ENCODE measurements at regions of chr4 and their contacts with region 1.

Region 1: GRCh38 chr4:89486042-89486441 is 178.4 kb upstream of the GPRIN3 start:
- DNase-seq: peak; percentile 49 to 71 (median 67)
- H3K4me3 ChIP-seq: no peak overlapping the region
- H3K27ac ChIP-seq: no peak overlapping the region
- H3K4me1 ChIP-seq: peaks cover 4 to 37% (median 12%) of the 10 kb centered on the region in 4 experiments
- H3K27me3 ChIP-seq: no peaks in the 10 kb centered on the region

Region 2: DNA sequence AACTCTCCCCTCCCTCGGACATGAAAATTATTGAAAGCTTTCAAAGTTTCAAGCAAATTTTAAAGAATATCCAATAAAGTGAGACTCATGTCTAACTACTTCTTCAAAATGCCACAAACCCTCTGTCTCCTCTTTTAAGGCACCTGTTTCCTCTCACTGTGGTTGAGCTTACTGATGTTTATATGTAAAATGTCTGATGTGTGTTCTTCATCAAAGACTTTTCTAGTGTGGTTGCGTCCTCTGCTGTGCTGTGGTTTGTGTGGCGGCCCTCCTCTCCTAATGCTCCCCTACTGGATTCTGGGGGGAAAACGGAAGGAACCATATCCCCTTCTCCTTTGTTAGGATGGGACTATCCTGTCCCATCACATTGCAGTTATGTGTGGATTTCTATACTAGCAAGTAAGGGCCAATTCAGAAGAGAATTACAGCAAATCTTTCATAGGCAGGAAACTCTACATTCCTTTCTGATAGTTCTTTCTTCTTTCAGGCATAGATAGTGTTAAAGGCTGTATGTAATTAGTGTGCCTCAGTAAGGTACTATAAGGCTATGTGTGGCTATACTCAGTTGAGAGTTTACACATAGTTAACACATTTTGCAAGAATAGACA is 42.6 kb after region 1 on chr4:
- CTCF ChIA-PET with region 1: interaction called, 17 read pairs
- POLR2A ChIA-PET with region 1: interaction called, 3 read pairs
- DNase-seq: peak; percentile 36 to 94 (median 89)
- H3K4me3 ChIP-seq: peak overlapping the region in 1 of 7 experiments; percentile 7
- H3K27ac ChIP-seq: no peak overlapping the region
- H3K4me1 ChIP-seq: peaks cover 2 to 12% (median 9%) of the 10 kb centered on the region in 4 experiments
- H3K27me3 ChIP-seq: no peaks in the 10 kb centered on the region

Region 3: GRCh38 chr4:89868999-89869589 is 383.1 kb after region 1 on chr4:
- CTCF ChIA-PET with region 1: interaction called, 14 read pairs
- POLR2A ChIA-PET with region 1: no interaction called
- DNase-seq: peak in 2 of 3 donors; percentile 34 to 41
- H3K4me3 ChIP-seq: no peak overlapping the region
- H3K27ac ChIP-seq: no peak overlapping the region
- H3K4me1 ChIP-seq: no peaks in the 10 kb centered on the region
- H3K27me3 ChIP-seq: no peaks in the 10 kb centered on the region

Measured in common myeloid progenitor, CD34-positive (primary cell).